Tibial artery (tissue), 4 donors: ENCODE measurements at regions of chr13 and their contacts with region 1.

Region 1: GRCh38 chr13:97855570-97856303 is 97.7 kb upstream of the IPO5 start:
- DNase-seq: peak; percentile 37 to 68
- H3K4me3 ChIP-seq: no peak overlapping the region
- H3K27ac ChIP-seq: no peak overlapping the region
- H3K4me1 ChIP-seq: peaks cover 0 to 6% (median 4%) of the 10 kb centered on the region in 4 donors
- H3K27me3 ChIP-seq: no peaks in the 10 kb centered on the region
- CTCF ChIP-seq: peak; percentile 75 to 81

Region 2: GRCh38 chr13:97318532-97318931 is 537.2 kb before region 1 on chr13:
- intact Hi-C with region 1: no loop called
- DNase-seq: no peak
- H3K4me3 ChIP-seq: no peak overlapping the region
- H3K27ac ChIP-seq: peak overlapping the region in 1 of 2 donors; percentile 17
- H3K4me1 ChIP-seq: peaks cover 0 to 81% (median 36%) of the 10 kb centered on the region in 4 donors
- H3K27me3 ChIP-seq: no peaks in the 10 kb centered on the region
- CTCF ChIP-seq: no peak

Region 3: DNA sequence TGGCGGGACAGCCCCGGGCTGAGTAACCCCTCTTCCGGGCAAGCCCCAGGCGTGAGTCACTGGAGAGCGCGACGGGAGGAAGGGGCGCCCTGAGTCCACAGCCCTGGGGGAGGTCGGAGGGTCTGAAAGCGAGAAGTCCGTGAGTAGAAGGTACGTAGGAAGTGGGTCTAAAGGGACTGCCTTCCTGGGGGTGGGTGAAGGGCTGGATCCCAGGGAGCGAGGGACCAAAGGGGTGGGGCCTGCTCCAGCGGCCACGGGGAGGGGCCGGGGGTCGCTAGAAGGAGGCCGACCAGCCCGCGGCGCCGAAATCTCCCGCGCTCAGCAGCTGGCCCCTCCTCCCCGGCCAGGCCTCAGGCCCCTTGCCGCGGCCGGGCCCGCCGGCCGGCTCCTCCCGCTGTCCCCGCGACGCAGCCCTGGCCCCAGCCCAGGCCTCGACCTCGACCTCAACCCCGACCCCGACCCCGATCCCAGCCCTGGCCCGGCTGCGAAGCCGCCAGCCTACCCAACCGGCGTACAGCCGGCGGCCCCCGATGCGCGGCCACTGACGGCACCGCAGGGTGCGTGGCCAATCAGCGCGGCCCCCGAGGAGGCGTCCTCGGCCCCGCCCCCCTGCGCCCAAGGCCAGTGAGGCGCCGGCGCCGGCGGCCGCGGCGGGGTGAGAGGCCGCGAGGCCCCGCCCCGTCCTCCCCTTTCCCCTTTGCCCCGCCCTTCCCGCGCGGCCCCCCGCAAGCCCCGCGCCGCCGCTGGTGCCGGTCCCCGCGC is 120.3 kb after region 1 on chr13:
- intact Hi-C with region 1: loop called (anchors 10 kb)
- DNase-seq: peak; percentile 85 to 93
- H3K4me3 ChIP-seq: peak overlapping the region; percentile 80 to 96
- H3K27ac ChIP-seq: peak overlapping the region; percentile 94 to 97
- H3K4me1 ChIP-seq: peaks cover 0 to 40% (median 12%) of the 10 kb centered on the region in 4 donors
- H3K27me3 ChIP-seq: no peaks in the 10 kb centered on the region
- CTCF ChIP-seq: no peak

Region 4: GRCh38 chr13:98349731-98350305 is 494.1 kb after region 1 on chr13:
- intact Hi-C with region 1: no loop called
- DNase-seq: no peak
- H3K4me3 ChIP-seq: no peak overlapping the region
- H3K27ac ChIP-seq: no peak overlapping the region
- H3K4me1 ChIP-seq: peaks cover 0 to 13% (median 1%) of the 10 kb centered on the region in 4 donors
- H3K27me3 ChIP-seq: no peaks in the 10 kb centered on the region
- CTCF ChIP-seq: no peak

Region 5: DNA sequence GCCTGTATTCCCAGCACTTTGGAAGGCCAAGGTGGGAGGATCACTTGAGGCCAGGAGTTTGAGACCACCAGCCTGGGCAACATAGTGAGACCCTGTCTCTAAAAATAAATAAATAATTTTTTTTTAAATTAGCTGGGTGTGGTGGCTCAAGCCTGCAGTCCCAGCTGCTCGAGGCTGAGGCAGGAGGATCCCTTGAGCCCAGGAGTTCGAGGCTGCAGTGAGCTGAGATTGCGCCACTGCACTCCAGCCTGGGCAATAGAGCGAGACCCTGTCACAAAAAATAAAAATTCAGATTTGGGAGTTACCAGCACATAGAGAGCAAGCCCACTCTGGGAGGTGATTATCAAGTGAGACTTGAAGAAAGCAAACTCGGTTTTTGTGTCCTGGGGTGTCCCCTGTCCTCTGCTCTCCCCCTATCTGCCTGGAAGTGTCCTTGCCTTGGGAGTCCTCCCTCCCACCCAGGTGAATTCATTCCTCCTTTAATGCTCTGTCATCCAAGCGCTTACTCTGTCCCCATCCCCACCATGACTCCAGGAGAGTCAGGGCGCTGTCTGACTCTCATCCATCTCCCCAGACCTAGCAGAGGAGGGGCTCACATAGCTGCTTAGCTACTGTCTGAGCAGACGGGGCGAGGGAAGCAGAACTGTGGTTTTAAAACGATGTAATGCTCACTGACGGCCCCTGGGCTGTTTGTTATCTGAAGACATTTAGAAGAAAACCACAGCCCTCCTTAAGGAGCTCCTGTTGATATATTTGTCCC is 574.4 kb after region 1 on chr13:
- intact Hi-C with region 1: loop called (anchors 10 kb)
- DNase-seq: no peak
- H3K4me3 ChIP-seq: no peak overlapping the region
- H3K27ac ChIP-seq: no peak overlapping the region
- H3K4me1 ChIP-seq: no peaks in the 10 kb centered on the region
- H3K27me3 ChIP-seq: no peaks in the 10 kb centered on the region
- CTCF ChIP-seq: no peak

Region 6: GRCh38 chr13:98685146-98685545 is 829.4 kb after region 1 on chr13:
- intact Hi-C with region 1: loop called (anchors 10 kb)
- DNase-seq: no peak
- H3K4me3 ChIP-seq: no peak overlapping the region
- H3K27ac ChIP-seq: no peak overlapping the region
- H3K4me1 ChIP-seq: no peaks in the 10 kb centered on the region
- H3K27me3 ChIP-seq: no peaks in the 10 kb centered on the region
- CTCF ChIP-seq: no peak